ENCODE measurements at regions of chr12 and their contacts with region 1.

Region 1: GRCh38 chr12:53251477-53252348 is 16.4 kb upstream of the ESPL1 start:
- DNase-seq: peak; percentile 80
- ATAC-seq: peak; percentile 83
- H3K4me3 ChIP-seq: peak overlapping the region; percentile 99
- H3K27ac ChIP-seq: peak overlapping the region; percentile 84
- H3K4me1 ChIP-seq: peaks cover 19% of the 10 kb centered on the region
- H3K27me3 ChIP-seq: no peaks in the 10 kb centered on the region
- CTCF ChIP-seq: peak; percentile 52

Region 2: GRCh38 chr12:53267999-53268647 is 16.4 kb after region 1 on chr12 and contains the start of gene ESPL1:
- CTCF ChIA-PET with region 1: no interaction called
- POLR2A ChIA-PET with region 1: interaction called, 7 read pairs
- intact Hi-C with region 1: loop called (anchors 2 kb)
- DNase-seq: peak; percentile 71
- ATAC-seq: peak; percentile 88
- H3K4me3 ChIP-seq: peak within 1 kb of the TSS; percentile 82
- H3K27ac ChIP-seq: peak within 1 kb of the TSS; percentile 44
- H3K4me1 ChIP-seq: peaks cover 28% of the 10 kb centered on the region
- H3K27me3 ChIP-seq: no peaks in the 10 kb centered on the region
- CTCF ChIP-seq: 0 out of 2 replicates have a peak, but pooled peaks have one; percentile 19
- total RNA-seq, gene ESPL1: 31.6 and 37.3 TPM in 2 replicates

Region 3: GRCh38 chr12:53984901-53985709 is 733.4 kb after region 1 on chr12 and contains the start of gene HOXC10:
- CTCF ChIA-PET with region 1: no interaction called
- POLR2A ChIA-PET with region 1: no interaction called
- intact Hi-C with region 1: no loop called
- DNase-seq: peak; percentile 93
- ATAC-seq: peak; percentile 64
- H3K4me3 ChIP-seq: peak within 1 kb of the TSS; percentile 46; the same call in 1 of the 2 replicates
- H3K27ac ChIP-seq: no peak within 1 kb of the TSS
- H3K4me1 ChIP-seq: peaks cover 26% of the 10 kb centered on the region
- H3K27me3 ChIP-seq: no peaks in the 10 kb centered on the region
- CTCF ChIP-seq: peak; percentile 71
- total RNA-seq, gene HOXC10: 0.69 and 2.9 TPM in 2 replicates